Sciatic nerve (tissue), 2 donors: ENCODE measurements at regions of chr19 and their contacts with region 1.

Region 1: DNA sequence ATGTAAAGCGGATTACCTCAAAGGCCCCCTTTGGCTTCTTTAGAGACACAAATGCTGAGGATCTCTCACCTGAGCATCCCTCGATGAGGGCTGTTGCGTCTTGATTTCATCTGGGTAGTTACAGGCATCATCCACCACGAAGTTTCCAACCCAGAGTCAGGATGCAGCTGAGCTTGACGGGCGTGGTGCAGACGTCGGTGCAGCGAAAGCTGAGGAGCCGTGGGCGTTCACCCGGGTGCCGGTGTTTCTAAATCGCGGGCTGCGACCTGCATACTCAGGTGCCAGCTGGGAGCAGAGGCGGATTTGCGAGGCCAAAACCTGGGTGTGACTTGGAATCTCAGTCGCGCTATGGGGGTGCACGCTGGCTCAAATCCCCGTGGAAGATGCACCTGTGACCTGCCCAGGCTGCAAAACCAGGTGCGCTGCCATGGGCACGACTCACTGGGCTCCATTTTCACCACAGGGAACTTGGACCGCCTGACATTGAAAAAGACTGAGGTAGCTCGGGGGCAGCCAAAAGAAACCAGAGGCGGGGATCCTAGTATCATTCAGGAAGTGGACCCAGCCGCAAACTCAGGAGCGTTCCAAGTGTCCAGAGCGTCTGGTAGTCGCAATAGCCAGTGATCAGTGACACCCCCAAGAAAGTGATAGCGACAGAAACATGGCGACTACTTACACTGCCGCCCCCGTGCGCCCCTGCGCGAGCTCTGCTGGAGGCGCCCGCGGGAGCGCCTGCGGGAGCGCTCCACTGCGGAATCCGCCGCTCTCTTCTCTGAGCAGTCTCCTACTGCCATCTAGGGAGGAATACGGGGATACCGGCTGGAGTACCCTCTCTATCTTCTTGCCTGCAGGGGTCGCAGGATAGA is 36.4 kb upstream of the IGFL4 start:
- DNase-seq: peak; percentile 64
- ATAC-seq: peak; percentile 78

Region 2: GRCh38 chr19:46016426-46017094 is 60.6 kb before region 1 on chr19:
- intact Hi-C with region 1: no loop called
- DNase-seq: peak; percentile 90
- ATAC-seq: peak; percentile 88

Region 3: DNA sequence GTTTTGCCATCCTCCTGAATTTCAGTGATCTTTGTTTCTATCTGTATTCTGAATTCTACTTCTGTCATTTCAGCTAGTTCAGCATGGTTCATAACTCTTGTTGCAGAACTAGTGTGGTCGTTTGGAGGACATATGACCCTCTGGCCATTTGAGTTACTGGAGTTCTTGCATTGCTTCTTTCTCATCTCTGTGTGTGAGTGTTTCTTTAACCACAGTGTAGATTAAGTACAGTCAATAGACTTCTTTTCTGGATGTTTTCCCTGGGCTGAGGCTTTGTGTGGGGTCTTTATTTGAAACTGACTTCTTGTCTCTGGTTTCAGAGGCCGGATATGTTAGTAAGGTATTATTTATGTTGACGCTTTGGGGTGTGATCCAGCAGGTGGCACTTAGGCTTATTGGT is 85.5 kb after region 1 on chr19:
- intact Hi-C with region 1: no loop called
- DNase-seq: no peak
- ATAC-seq: no peak

Region 4: GRCh38 chr19:46181388-46181779 is 104.2 kb after region 1 on chr19:
- intact Hi-C with region 1: loop called (anchors 10 kb)
- DNase-seq: no peak
- ATAC-seq: no peak

Region 5: DNA sequence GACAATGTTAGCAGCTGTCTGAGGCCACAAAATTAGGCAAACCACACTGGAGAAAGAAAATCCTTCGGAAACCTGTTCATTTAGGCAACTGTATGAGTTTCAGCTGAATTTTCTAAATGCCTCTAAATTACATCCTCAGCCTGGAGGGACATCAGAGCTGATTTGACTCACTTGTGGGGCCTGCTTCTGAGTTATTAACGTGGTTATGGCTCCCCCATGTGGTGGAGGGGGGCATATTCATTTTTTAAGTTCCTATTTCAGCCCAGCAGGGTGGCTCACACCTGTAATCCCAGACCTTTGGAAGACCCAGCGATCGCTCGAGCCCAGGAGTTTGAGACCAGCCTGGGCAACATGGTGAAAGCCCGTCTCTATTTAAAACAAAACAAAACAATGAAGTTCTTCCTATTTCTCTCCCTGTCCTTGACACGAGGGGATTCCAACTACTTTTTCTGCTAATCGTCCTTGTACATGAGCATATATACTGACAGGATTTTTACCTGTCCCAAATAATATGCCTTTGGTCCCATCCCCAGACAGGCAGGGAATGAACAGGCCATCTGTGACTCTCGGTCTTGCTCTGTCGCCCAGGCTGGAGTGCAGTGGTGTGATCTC is 188.1 kb after region 1 on chr19:
- intact Hi-C with region 1: loop called (anchors 5 kb)
- DNase-seq: peak; percentile 75
- ATAC-seq: peak; percentile 78